ENCODE measurements at regions of chr2 and their contacts with region 1.

Region 1: GRCh38 chr2:151409601-151410484 is at the start of gene RIF1:
- DNase-seq: peak; percentile 90
- H3K4me3 ChIP-seq: peak within 1 kb of the TSS; percentile 89 to 100 (median 97)
- H3K27ac ChIP-seq: peak within 1 kb of the TSS; percentile 60
- H3K4me1 ChIP-seq: peaks cover 7% of the 10 kb centered on the region
- H3K27me3 ChIP-seq: no peaks in the 10 kb centered on the region
- CTCF ChIP-seq: peak; percentile 50 to 79
- POLR2A ChIP-seq: peak; percentile 77
- total RNA-seq, gene RIF1: 43.7 and 55.3 TPM in 2 replicates

Region 2: GRCh38 chr2:149677416-149677815 is 1732.4 kb before region 1 on chr2:
- CTCF ChIA-PET with region 1: no interaction called
- POLR2A ChIA-PET with region 1: no interaction called
- dilution Hi-C with region 1: no loop called
- intact Hi-C with region 1: no loop called
- DNase-seq: peak; percentile 7
- H3K4me3 ChIP-seq: no peak overlapping the region
- H3K27ac ChIP-seq: no peak overlapping the region
- H3K4me1 ChIP-seq: no peaks in the 10 kb centered on the region
- H3K27me3 ChIP-seq: no peaks in the 10 kb centered on the region
- CTCF ChIP-seq: no peak
- POLR2A ChIP-seq: no peak

Region 3: GRCh38 chr2:151289369-151290088 is 120.3 kb before region 1 on chr2 and contains the start of gene NMI:
- CTCF ChIA-PET with region 1: interaction called, 9 read pairs
- POLR2A ChIA-PET with region 1: no interaction called
- dilution Hi-C with region 1: no loop called
- intact Hi-C with region 1: loop called (anchors 1 kb)
- DNase-seq: peak; percentile 82
- H3K4me3 ChIP-seq: peak within 1 kb of the TSS; percentile 75 to 99 (median 78)
- H3K27ac ChIP-seq: peak within 1 kb of the TSS; percentile 90
- H3K4me1 ChIP-seq: peaks cover 16% of the 10 kb centered on the region
- H3K27me3 ChIP-seq: no peaks in the 10 kb centered on the region
- CTCF ChIP-seq: peak in 1 of 2 donors; percentile 15
- POLR2A ChIP-seq: peak; percentile 53
- total RNA-seq, gene NMI: 17.1 and 24.9 TPM in 2 replicates

Region 4: GRCh38 chr2:151350579-151351195 is 59.2 kb before region 1 on chr2:
- CTCF ChIA-PET with region 1: no interaction called
- POLR2A ChIA-PET with region 1: no interaction called
- dilution Hi-C with region 1: no loop called
- intact Hi-C with region 1: loop called (anchors 5 kb)
- DNase-seq: peak; percentile 65
- H3K4me3 ChIP-seq: no peak overlapping the region
- H3K27ac ChIP-seq: peak overlapping the region; percentile 46
- H3K4me1 ChIP-seq: peaks cover 18% of the 10 kb centered on the region
- H3K27me3 ChIP-seq: no peaks in the 10 kb centered on the region
- CTCF ChIP-seq: no peak
- POLR2A ChIP-seq: no peak

Measured in endothelial cell of umbilical vein (primary cell).